Mammary epithelial cell (primary cell): ENCODE measurements at regions of chr4 and their contacts with region 1.

Region 1: GRCh38 chr4:178081176-178081575 is 638.9 kb upstream of the AGA start:
- DNase-seq: no peak
- H3K4me3 ChIP-seq: no peak overlapping the region
- H3K27ac ChIP-seq: no peak overlapping the region
- H3K4me1 ChIP-seq: no peaks in the 10 kb centered on the region
- H3K27me3 ChIP-seq: no peaks in the 10 kb centered on the region
- CTCF ChIP-seq: no peak

Region 2: GRCh38 chr4:177923888-177924287 is 157.3 kb before region 1 on chr4:
- CTCF ChIA-PET with region 1: interaction called, 10 read pairs
- dilution Hi-C with region 1: no loop called
- in situ Hi-C with region 1: no loop called
- intact Hi-C with region 1: no loop called
- DNase-seq: no peak
- H3K4me3 ChIP-seq: no peak overlapping the region
- H3K27ac ChIP-seq: no peak overlapping the region
- H3K4me1 ChIP-seq: no peaks in the 10 kb centered on the region
- H3K27me3 ChIP-seq: no peaks in the 10 kb centered on the region
- CTCF ChIP-seq: no peak

Region 3: DNA sequence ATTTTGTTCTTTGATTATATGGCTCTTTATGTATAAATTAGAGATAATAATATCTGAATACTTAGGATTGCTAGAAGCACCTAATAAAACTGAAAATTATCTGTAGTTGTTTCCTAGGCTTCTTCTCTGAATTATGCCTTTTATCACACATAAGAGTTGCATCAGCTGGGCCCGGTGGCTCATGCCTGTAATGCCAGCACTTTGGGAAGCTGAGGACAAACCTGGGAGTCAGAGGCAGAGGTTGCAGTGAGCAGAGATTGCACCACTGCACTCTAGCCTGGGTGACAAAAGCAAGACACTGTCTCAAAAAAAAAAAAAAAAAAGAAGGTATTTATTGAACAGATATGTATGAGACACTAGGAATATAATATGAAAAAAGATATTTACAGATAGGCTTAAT is 134.6 kb after region 1 on chr4:
- CTCF ChIA-PET with region 1: no interaction called
- dilution Hi-C with region 1: no loop called
- in situ Hi-C with region 1: no loop called
- intact Hi-C with region 1: no loop called
- DNase-seq: no peak
- H3K4me3 ChIP-seq: no peak overlapping the region
- H3K27ac ChIP-seq: no peak overlapping the region
- H3K4me1 ChIP-seq: no peaks in the 10 kb centered on the region
- H3K27me3 ChIP-seq: no peaks in the 10 kb centered on the region
- CTCF ChIP-seq: no peak